ENCODE measurements at regions of chr12 and their contacts with region 1.

Region 1: GRCh38 chr12:31682136-31682962 is 22.9 kb downstream of the ETFBKMT start:
- DNase-seq: peak; percentile 76
- ATAC-seq: peak; percentile 95
- H3K4me3 Mint-ChIP-seq: no peak overlapping the region
- H3K27ac Mint-ChIP-seq: peak overlapping the region; percentile 53
- H3K4me1 Mint-ChIP-seq: peaks cover 6% of the 10 kb centered on the region
- H3K27me3 Mint-ChIP-seq: no peaks in the 10 kb centered on the region

Region 2: DNA sequence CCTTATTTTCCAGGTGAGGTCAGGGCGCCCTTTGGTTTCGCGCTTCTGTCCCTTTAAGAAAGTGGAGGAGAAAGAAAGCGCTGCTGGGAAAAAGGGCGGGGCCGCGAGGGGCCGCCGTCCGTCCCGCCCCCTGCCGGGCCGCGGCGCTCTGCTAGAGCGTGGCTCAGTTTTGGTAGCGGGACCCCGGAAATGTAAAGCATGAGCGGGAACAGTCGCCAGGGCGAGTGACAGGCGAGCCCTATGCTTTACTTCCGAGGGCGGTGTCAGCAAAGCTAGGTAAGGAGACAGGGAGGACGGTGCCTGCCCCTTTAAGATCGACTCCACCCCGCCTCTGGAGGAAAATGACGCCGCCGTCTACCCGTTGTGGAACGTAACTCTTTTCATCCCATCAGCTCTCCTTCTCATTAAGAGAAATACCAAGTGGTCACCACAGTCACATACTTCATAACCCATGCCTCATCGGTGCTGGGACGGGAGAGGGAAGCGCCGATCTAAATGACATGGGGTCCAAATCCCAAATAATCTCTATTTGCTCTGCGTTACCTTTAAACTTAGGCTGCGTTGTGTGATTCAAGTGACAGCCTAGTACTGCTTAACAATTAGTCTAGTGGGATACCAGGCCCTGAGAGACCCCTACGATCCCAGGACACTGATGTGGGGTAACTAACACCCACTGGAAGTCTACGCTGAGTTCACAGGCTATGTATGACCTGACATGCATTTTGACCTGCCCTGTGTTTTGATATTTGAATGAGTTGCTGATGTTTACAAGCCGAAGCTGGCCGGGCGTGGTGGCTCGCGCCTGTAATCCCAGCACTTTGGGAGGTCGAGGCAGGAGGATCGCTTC is 23.0 kb before region 1 on chr12 and contains the start of gene ETFBKMT:
- CTCF ChIA-PET with region 1: interaction called, 19 read pairs
- POLR2A ChIA-PET with region 1: no interaction called
- intact Hi-C with region 1: loop called in 1 of 2 experiments (anchors 2 kb)
- DNase-seq: peak; percentile 96
- ATAC-seq: peak; percentile 99
- H3K4me3 Mint-ChIP-seq: peak within 1 kb of the TSS; percentile 87
- H3K27ac Mint-ChIP-seq: peak within 1 kb of the TSS; percentile 100
- H3K4me1 Mint-ChIP-seq: peaks cover 13% of the 10 kb centered on the region
- H3K27me3 Mint-ChIP-seq: no peaks in the 10 kb centered on the region
- total RNA-seq, gene ETFBKMT: 0.35 to 1.4 TPM

Region 3: DNA sequence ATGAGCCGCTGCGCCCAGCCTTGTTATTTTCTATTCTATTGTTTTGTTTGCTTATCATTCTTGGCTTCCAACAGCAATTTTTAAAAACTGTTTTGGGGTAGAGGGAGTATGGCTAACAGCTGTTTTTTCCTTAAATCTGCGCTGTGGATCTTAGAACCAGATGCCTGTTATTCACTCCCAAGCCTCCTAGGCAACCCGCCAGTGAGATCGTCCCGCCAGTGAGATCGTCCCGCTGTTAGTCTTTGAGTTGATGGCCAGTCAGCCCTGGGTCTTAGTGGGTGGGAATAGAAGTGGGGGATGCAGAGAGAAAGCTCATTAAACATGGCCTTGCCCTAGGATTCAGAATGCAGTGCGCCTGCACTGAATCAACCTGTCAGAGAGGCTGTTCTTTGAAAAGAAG is 357.0 kb after region 1 on chr12:
- CTCF ChIA-PET with region 1: no interaction called
- POLR2A ChIA-PET with region 1: no interaction called
- intact Hi-C with region 1: no loop called
- DNase-seq: no peak
- ATAC-seq: no peak
- H3K4me3 Mint-ChIP-seq: no peak overlapping the region
- H3K27ac Mint-ChIP-seq: no peak overlapping the region
- H3K4me1 Mint-ChIP-seq: no peaks in the 10 kb centered on the region
- H3K27me3 Mint-ChIP-seq: no peaks in the 10 kb centered on the region

Region 4: DNA sequence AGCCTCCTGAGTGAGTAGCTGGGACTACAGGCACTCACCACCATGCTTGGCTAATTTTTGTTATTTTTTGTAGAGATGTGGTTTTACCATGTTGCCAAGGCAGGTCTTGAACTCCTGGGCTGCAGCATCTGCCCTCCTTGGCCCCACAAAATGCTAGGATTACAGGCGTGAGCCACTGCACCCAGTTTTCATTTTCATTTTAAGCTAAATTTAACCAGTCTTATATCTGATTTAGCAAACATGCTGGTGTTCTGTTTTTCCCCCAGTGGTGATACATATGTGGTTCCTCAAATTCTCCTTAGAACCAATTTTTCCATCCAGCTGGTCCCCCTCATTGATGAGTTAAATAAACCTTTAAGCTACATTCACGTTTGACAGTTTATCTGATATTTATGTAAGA is 380.5 kb after region 1 on chr12:
- CTCF ChIA-PET with region 1: interaction called, 3 read pairs
- POLR2A ChIA-PET with region 1: no interaction called
- intact Hi-C with region 1: loop called (anchors 1 kb)
- DNase-seq: no peak
- ATAC-seq: no peak
- H3K4me3 Mint-ChIP-seq: no peak overlapping the region
- H3K27ac Mint-ChIP-seq: no peak overlapping the region
- H3K4me1 Mint-ChIP-seq: peaks cover 10% of the 10 kb centered on the region
- H3K27me3 Mint-ChIP-seq: no peaks in the 10 kb centered on the region

Region 5: DNA sequence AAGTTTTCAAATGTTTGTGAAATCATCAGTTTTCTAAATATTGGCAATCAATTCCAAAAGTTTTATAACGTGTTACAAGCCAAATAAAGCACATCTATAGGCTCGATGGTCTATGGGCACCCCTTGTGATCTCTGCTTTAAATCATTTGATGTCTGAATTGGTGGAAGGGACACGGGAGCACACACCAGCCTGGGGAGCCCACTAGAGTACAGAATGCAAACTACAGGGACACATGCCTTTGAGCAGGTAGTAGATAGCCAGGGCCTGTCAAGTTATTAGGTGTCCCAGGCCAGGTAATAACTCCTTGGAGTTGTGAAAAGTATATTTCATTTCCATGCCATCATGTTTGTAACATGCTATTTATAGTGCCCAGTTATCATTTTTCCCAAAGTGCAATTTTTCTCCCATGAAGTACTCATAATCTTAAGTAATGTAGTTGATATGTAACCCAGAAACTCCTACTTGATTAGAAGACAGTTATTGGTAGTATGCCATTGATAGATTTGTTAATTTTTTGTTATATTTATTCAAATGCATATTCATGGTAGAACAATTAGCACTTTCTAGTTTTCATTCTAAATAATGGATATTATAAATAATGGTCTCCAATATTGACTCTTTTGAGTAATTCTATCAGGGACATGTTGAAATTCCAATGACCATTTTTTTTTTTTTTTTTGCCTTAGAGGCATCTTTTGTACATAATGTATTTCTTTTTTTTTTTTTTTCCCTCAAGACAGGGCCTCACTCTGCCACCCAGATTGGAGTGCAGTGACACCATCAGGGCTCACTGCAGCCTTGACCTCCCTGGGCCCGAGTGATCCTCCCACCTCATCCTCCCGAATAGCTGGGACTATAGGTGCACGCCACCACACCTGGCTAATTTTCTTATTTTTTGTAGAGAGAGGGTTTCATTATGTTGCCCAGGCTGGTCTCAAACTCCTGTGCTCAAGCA is 620.1 kb after region 1 on chr12:
- CTCF ChIA-PET with region 1: interaction called, 5 read pairs
- POLR2A ChIA-PET with region 1: no interaction called
- intact Hi-C with region 1: loop called (anchors 1 kb)
- DNase-seq: peak; percentile 37
- ATAC-seq: peak; percentile 66
- H3K4me3 Mint-ChIP-seq: no peak overlapping the region
- H3K27ac Mint-ChIP-seq: no peak overlapping the region
- H3K4me1 Mint-ChIP-seq: no peaks in the 10 kb centered on the region
- H3K27me3 Mint-ChIP-seq: no peaks in the 10 kb centered on the region

Measured in activated CD4-positive, alpha-beta T cell treated with anti-CD3 and anti-CD28 coated beads for 36 hours (primary cell).